ENCODE measurements at regions of chr1 and their contacts with region 1.

Region 1: GRCh38 chr1:169348383-169349036 is 19.1 kb downstream of the NME7 start:
- DNase-seq: no peak
- H3K4me3 ChIP-seq: no peak overlapping the region
- H3K27ac ChIP-seq: no peak overlapping the region
- H3K4me1 ChIP-seq: peaks cover 0 to 11% (median 0%) of the 10 kb centered on the region in 6 donors
- H3K27me3 ChIP-seq: no peaks in the 10 kb centered on the region
- CTCF ChIP-seq: peak; percentile 68 to 87 (median 77)
- POLR2A ChIP-seq: no peak

Region 2: DNA sequence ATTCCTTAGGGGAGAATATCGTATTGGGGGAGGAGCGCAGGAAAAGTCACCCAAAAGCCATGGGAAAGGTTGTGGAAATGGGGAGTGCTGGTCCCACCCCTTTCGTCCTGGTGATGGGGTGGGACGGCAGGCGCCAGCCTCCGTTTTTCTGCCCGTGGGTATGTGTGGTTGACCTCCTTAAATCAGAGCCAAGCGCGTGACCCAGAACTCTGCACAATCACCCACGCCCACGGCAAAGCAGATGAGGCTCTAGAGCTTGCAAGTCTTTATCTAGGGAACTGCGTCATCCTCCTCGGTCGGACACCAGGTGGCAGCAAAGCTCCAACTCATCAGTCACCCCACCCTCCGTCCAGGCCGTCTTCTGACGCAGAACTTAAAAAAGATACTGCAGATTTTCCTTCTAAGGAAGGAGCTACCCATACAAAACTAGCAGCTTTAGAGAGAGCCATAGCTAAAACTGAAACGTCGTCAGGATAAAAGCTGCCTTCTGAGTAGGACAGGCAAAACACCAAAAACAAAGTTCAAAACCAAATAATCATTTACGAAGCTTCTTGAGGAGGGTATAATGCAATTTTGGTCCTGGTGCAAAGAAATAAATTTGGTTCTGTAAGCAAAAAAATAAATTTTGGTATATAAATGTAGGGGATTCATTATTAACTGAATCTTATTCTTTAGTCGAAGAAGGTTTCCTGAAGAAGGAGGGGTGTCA is 1005.8 kb before region 1 on chr1:
- intact Hi-C with region 1: loop called (anchors 5 kb)
- DNase-seq: peak; percentile 94
- H3K4me3 ChIP-seq: peak overlapping the region in 1 of 8 donors; percentile 50
- H3K27ac ChIP-seq: peak overlapping the region in 5 of 8 donors; percentile 44 to 63 (median 56)
- H3K4me1 ChIP-seq: peaks cover 0 to 35% (median 15%) of the 10 kb centered on the region in 6 donors
- H3K27me3 ChIP-seq: no peaks in the 10 kb centered on the region
- CTCF ChIP-seq: peak; percentile 60 to 91 (median 85)
- POLR2A ChIP-seq: no peak

Region 3: DNA sequence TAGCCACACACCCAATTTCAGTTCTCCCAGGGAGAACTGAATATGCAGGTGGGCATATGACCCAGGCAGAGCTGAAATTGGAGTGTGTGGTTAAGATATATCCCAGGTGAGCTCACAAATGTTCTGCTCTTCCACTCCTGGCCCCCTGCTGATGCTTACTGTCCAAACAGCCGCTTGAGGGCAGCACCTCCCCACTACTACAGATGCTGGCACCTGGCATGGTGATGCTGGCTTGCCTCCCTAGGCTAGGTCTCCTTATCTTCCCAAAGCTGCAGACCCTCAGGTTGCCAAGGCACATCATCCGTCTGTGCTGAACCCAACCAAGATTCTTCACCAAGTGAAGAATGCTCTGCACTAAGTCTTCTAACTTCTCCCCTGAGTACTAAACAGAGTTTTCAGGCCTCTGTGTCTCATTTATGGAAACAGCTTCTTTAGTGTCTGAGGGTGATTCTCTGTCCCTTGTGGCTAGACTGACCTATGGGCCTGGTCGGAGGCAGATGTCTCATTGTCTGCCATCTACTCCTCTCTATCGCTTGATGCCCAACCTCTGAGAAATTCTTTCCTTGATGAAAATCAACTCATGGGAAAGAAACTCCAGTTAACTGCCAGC is 744.9 kb before region 1 on chr1:
- intact Hi-C with region 1: loop called (anchors 5 kb)
- DNase-seq: peak; percentile 87
- H3K4me3 ChIP-seq: no peak overlapping the region
- H3K27ac ChIP-seq: no peak overlapping the region
- H3K4me1 ChIP-seq: peaks cover 0 to 1% (median 0%) of the 10 kb centered on the region in 6 donors
- H3K27me3 ChIP-seq: no peaks in the 10 kb centered on the region
- CTCF ChIP-seq: peak; percentile 47 to 83 (median 76)
- POLR2A ChIP-seq: no peak

Region 4: DNA sequence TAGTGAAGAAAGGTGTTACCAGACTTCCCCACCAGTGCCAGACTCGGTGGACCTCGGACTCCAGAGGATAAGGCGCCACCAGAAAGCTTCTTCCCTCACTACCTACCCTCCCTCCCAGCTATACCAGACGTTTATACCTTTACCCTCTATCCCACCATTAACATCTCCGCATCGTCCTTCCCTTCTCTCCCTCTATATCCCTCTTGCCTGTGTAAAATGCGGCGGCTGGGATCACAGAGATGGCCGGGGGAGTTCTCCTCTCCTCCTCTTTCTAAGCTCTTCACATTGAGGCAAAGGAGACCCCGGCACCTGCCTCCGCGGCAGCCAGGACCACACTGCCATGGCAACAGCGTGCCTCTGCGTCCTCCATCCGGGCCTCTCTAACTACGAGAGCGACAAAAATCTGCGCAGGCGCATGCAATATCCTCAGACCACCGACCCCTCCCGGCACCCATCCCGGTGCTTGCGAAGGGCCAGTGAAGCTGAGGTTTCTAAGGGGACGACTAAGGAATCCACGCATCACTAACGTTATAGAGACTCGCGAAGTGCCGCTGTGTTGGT is 78.7 kb after region 1 on chr1 and contains the start of gene CCDC181:
- intact Hi-C with region 1: no loop called
- DNase-seq: peak; percentile 72
- H3K4me3 ChIP-seq: peak within 1 kb of the TSS; percentile 6 to 63 (median 22)
- H3K27ac ChIP-seq: no peak within 1 kb of the TSS
- H3K4me1 ChIP-seq: peaks cover 0 to 11% (median 8%) of the 10 kb centered on the region in 6 donors
- H3K27me3 ChIP-seq: peaks cover 0 to 67% (median 16%) of the 10 kb centered on the region in 7 donors
- CTCF ChIP-seq: no peak
- POLR2A ChIP-seq: no peak
- total RNA-seq, gene CCDC181: not detected

Region 5: DNA sequence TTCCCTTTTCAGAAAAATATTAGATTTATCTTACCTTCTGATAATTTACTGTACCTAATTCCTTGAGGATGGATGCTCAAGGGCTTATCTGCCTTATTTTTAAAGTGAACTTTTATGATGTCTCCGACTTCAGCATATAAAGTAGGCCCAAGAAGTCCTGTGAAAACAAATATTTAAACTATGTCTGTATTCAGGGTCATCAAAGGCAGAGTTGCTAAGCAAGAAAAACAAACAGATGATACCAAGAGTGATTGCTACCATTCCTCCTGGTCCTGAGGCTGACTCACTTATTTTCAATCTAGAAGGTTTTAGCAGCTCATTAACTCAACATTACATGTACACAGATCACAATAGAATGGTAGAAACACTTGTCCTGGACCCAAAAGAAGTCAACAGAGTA is 223.7 kb after region 1 on chr1:
- intact Hi-C with region 1: no loop called
- DNase-seq: no peak
- H3K4me3 ChIP-seq: no peak overlapping the region
- H3K27ac ChIP-seq: no peak overlapping the region
- H3K4me1 ChIP-seq: no peaks in the 10 kb centered on the region
- H3K27me3 ChIP-seq: peaks cover 0 to 4% (median 0%) of the 10 kb centered on the region in 7 donors
- CTCF ChIP-seq: no peak
- POLR2A ChIP-seq: no peak

Measured in spleen (tissue), 13 donors.